Activated CD4-positive, alpha-beta T cell treated with anti-CD3 and anti-CD28 coated beads for 36 hours (primary cell): ENCODE measurements at regions of chr16 and their contacts with region 1.

Region 1: GRCh38 chr16:20383106-20384029 is 21.2 kb downstream of the PDILT start:
- DNase-seq: peak; percentile 71
- ATAC-seq: peak; percentile 84
- H3K4me3 Mint-ChIP-seq: no peak overlapping the region
- H3K27ac Mint-ChIP-seq: no peak overlapping the region
- H3K4me1 Mint-ChIP-seq: no peaks in the 10 kb centered on the region
- H3K27me3 Mint-ChIP-seq: peaks cover 13% of the 10 kb centered on the region

Region 2: GRCh38 chr16:19898924-19899604 is 484.3 kb before region 1 on chr16:
- CTCF ChIA-PET with region 1: interaction called, 14 read pairs
- POLR2A ChIA-PET with region 1: no interaction called
- intact Hi-C with region 1: loop called in 1 of 2 experiments (anchors 2 kb)
- DNase-seq: peak; percentile 63
- ATAC-seq: peak; percentile 65
- H3K4me3 Mint-ChIP-seq: no peak overlapping the region
- H3K27ac Mint-ChIP-seq: no peak overlapping the region
- H3K4me1 Mint-ChIP-seq: no peaks in the 10 kb centered on the region
- H3K27me3 Mint-ChIP-seq: peaks cover 6% of the 10 kb centered on the region

Region 3: GRCh38 chr16:19912455-19913339 is 470.7 kb before region 1 on chr16:
- CTCF ChIA-PET with region 1: interaction called, 87 read pairs
- POLR2A ChIA-PET with region 1: no interaction called
- intact Hi-C with region 1: loop called (anchors 1 to 2 kb)
- DNase-seq: no peak
- ATAC-seq: no peak
- H3K4me3 Mint-ChIP-seq: no peak overlapping the region
- H3K27ac Mint-ChIP-seq: no peak overlapping the region
- H3K4me1 Mint-ChIP-seq: peaks cover 4% of the 10 kb centered on the region
- H3K27me3 Mint-ChIP-seq: peaks cover 6% of the 10 kb centered on the region

Region 4: GRCh38 chr16:20393801-20394577 is 10.6 kb after region 1 on chr16:
- CTCF ChIA-PET with region 1: interaction called, 28 read pairs
- POLR2A ChIA-PET with region 1: no interaction called
- intact Hi-C with region 1: no loop called
- DNase-seq: no peak
- ATAC-seq: no peak
- H3K4me3 Mint-ChIP-seq: no peak overlapping the region
- H3K27ac Mint-ChIP-seq: no peak overlapping the region
- H3K4me1 Mint-ChIP-seq: no peaks in the 10 kb centered on the region
- H3K27me3 Mint-ChIP-seq: peaks cover 2% of the 10 kb centered on the region

Region 5: GRCh38 chr16:20424129-20424866 is 40.9 kb after region 1 on chr16:
- CTCF ChIA-PET with region 1: no interaction called
- POLR2A ChIA-PET with region 1: no interaction called
- intact Hi-C with region 1: no loop called
- DNase-seq: no peak
- ATAC-seq: no peak
- H3K4me3 Mint-ChIP-seq: no peak overlapping the region
- H3K27ac Mint-ChIP-seq: no peak overlapping the region
- H3K4me1 Mint-ChIP-seq: no peaks in the 10 kb centered on the region
- H3K27me3 Mint-ChIP-seq: peaks cover 8% of the 10 kb centered on the region

Region 6: DNA sequence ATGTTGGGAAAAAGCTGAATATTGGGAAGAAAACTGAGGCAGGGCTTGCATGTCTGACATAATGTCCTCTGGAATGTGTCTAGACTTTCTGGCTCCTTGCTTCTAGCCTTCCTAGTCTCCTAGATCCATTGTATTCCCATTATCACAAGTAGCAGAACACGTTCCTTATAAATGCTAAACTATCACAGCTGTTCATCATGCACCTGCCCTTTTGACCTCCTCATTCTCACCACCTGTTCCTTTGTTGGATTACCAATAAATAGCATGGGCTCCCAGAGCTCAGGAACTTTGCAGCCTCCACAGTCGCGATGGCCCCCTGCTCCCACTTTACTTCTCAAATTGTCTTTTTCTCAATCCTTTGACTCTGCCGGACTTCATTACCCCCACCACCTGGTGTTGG is 264.4 kb after region 1 on chr16:
- CTCF ChIA-PET with region 1: no interaction called
- POLR2A ChIA-PET with region 1: no interaction called
- intact Hi-C with region 1: no loop called
- DNase-seq: no peak
- ATAC-seq: no peak
- H3K4me3 Mint-ChIP-seq: no peak overlapping the region
- H3K27ac Mint-ChIP-seq: no peak overlapping the region
- H3K4me1 Mint-ChIP-seq: no peaks in the 10 kb centered on the region
- H3K27me3 Mint-ChIP-seq: peaks cover 2% of the 10 kb centered on the region